ENCODE measurements at regions of chr7 and their contacts with region 1.

Region 1: GRCh38 chr7:106978425-106979420 is 65.8 kb upstream of the PRKAR2B start:
- DNase-seq: no peak
- ATAC-seq: no peak
- H3K4me3 ChIP-seq: no peak overlapping the region
- H3K27ac ChIP-seq: no peak overlapping the region
- H3K4me1 ChIP-seq: no peaks in the 10 kb centered on the region
- H3K27me3 ChIP-seq: no peaks in the 10 kb centered on the region
- CTCF ChIP-seq: no peak
- POLR2A ChIP-seq: no peak

Region 2: DNA sequence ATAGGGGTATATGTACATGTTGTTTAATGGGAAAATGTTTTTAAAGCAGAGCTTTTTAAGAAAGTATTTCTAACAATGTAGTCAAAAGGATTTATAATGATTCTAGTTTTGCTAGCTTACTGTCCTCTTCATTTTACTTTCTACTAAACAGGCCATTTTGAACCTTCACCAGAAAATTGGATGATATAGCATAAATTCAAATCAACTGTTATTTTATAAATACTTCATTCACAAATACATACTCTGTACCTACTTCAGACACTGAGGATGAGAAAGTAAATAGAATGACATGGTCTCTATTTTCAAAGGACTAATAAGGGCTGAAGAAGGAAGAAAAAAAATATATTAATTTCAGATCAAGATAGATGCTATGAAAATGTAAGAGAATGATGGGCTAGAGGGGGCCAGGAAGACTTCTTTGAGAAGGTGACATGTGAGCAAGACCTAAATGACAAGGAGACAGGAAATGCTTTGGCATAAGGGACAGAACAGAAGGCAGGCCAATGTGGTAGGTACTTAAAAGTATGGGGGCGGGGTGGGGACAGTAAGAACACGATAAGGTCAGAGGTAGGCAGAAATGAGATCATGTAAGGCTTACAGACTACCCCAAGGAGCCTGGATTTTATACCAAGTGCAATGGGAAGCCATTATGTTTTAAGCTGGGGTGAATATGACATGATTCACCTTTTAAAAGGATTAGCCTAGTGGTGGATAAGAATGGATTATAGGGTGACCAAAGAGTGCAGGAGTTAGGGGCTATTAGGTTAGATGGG is 699.1 kb before region 1 on chr7:
- in situ Hi-C with region 1: no loop called
- intact Hi-C with region 1: no loop called
- DNase-seq: no peak
- ATAC-seq: no peak
- H3K4me3 ChIP-seq: no peak overlapping the region
- H3K27ac ChIP-seq: no peak overlapping the region
- H3K4me1 ChIP-seq: peaks cover 24 to 42% of the 10 kb centered on the region in 2 donors
- H3K27me3 ChIP-seq: no peaks in the 10 kb centered on the region
- CTCF ChIP-seq: no peak
- POLR2A ChIP-seq: no peak

Region 3: DNA sequence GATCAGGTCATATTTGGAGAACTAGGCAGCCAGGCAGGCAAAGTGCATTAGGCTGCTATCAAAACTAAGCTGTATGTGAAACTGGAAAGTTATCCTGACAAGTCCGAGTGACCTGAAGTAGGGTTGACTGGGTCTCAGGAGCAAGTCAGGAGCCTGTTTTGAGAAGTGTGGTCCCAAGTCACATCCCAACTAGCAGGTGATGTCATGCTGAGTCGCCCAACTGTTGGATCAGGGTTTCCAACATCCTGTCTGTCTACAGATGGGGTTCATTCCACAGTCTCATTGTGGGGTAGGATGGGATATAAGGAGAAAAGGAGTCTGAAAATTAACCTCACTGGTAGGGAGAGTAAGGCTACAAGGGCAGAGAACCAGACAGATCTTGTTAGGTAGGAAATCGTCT is 708.9 kb after region 1 on chr7:
- in situ Hi-C with region 1: no loop called
- intact Hi-C with region 1: loop called (anchors 5 kb)
- DNase-seq: no peak
- ATAC-seq: no peak
- H3K4me3 ChIP-seq: no peak overlapping the region
- H3K27ac ChIP-seq: no peak overlapping the region
- H3K4me1 ChIP-seq: peaks cover 3 to 11% of the 10 kb centered on the region in 2 donors
- H3K27me3 ChIP-seq: no peaks in the 10 kb centered on the region
- CTCF ChIP-seq: no peak
- POLR2A ChIP-seq: no peak